Endothelial cell of umbilical vein (primary cell): ENCODE measurements at regions of chr1 and their contacts with region 1.

Region 1: GRCh38 chr1:227428803-227429202 is 110.5 kb upstream of the CDC42BPA start:
- DNase-seq: peak; percentile 98
- H3K4me3 ChIP-seq: peak overlapping the region in 1 of 3 experiments; percentile 6
- H3K27ac ChIP-seq: peak overlapping the region; percentile 99
- H3K4me1 ChIP-seq: peaks cover 55% of the 10 kb centered on the region
- H3K27me3 ChIP-seq: no peaks in the 10 kb centered on the region
- CTCF ChIP-seq: no peak
- POLR2A ChIP-seq: peak; percentile 40

Region 2: DNA sequence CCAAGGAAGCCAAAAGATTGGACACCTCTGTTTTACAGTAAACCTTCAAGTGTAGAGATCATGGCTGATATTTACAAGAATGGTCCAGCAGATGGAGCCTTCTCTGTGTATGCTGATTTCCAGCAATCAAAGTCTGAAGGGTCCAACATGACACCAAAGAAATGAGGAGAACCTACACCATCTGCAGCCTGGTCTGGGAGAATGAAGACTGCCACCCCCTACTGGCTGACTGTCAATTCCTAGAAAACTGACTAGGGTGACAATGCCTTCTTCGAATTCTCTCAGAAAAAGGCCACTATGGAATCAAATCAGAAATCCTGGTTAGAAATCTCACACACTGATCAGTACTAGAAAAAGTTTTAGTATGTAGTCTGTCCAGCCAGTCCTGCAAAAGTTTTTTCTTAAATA is 193.8 kb before region 1 on chr1:
- CTCF ChIA-PET with region 1: interaction called, 3 read pairs
- POLR2A ChIA-PET with region 1: no interaction called
- dilution Hi-C with region 1: no loop called
- intact Hi-C with region 1: loop called (anchors 2 kb)
- DNase-seq: peak; percentile 79
- H3K4me3 ChIP-seq: no peak overlapping the region
- H3K27ac ChIP-seq: no peak overlapping the region
- H3K4me1 ChIP-seq: peaks cover 11% of the 10 kb centered on the region
- H3K27me3 ChIP-seq: no peaks in the 10 kb centered on the region
- CTCF ChIP-seq: peak; percentile 55 to 60
- POLR2A ChIP-seq: no peak

Region 3: DNA sequence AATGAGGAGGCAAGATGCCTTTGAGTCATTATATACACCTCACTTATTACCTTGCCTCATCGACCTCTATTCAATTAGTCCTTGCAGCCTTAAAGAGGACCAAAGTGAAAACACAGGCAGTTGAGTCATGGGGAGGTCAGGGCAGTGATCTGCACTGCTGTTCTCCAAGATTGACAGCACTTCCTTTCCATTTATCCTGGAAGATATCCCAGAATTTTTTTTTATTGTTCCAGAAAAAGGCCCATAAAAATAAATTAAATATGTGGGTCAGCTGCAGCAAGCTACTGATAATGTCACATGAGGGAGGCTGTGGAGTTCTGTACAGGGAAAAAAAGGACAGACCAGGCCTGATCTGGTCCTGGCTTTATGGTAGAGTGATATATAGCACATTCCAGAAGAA is 77.4 kb before region 1 on chr1:
- CTCF ChIA-PET with region 1: interaction called, 20 read pairs
- POLR2A ChIA-PET with region 1: interaction called, 15 read pairs
- dilution Hi-C with region 1: no loop called
- intact Hi-C with region 1: loop called (anchors 1 kb)
- DNase-seq: peak; percentile 96
- H3K4me3 ChIP-seq: no peak overlapping the region
- H3K27ac ChIP-seq: peak overlapping the region; percentile 53
- H3K4me1 ChIP-seq: peaks cover 34% of the 10 kb centered on the region
- H3K27me3 ChIP-seq: no peaks in the 10 kb centered on the region
- CTCF ChIP-seq: no peak
- POLR2A ChIP-seq: no peak

Region 4: GRCh38 chr1:227370533-227371254 is 58.1 kb before region 1 on chr1:
- CTCF ChIA-PET with region 1: no interaction called
- POLR2A ChIA-PET with region 1: no interaction called
- dilution Hi-C with region 1: no loop called
- intact Hi-C with region 1: loop called (anchors 1 kb)
- DNase-seq: peak; percentile 80
- H3K4me3 ChIP-seq: no peak overlapping the region
- H3K27ac ChIP-seq: peak overlapping the region; percentile 14
- H3K4me1 ChIP-seq: peaks cover 23% of the 10 kb centered on the region
- H3K27me3 ChIP-seq: no peaks in the 10 kb centered on the region
- CTCF ChIP-seq: no peak
- POLR2A ChIP-seq: no peak

Region 5: DNA sequence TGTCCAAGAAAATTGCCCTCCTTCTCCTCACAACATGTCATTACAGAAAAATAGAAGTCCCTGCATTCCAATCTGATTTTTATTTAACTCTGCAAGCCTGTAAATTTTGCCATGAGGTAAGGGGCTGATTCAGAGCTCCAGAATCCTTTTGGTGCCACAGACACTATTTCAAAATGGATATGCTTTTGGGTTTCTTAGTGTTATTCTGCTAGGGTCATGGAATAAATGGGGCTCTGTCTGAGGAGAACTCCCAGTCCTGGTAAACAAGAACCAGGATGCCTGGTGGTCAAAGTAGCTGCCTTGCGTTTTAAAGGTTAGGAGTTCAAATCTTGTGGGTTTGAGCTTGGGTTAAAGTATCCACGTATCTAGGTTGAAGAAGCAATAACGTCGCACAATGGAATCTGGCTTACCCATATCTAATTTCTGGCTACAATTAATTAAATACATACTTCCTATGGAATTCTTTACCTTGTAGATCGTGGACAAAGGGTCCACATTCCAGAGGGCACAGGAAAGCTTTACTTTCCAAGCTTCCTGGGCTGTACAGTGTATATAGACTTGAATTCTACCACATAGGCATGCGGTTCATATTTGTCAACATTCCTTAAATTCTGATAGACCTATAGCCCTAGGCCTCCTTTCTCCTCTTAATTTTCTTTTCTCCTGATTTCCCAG is 12.5 kb before region 1 on chr1:
- CTCF ChIA-PET with region 1: interaction called, 4 read pairs
- POLR2A ChIA-PET with region 1: interaction called, 4 read pairs
- dilution Hi-C with region 1: no loop called
- intact Hi-C with region 1: loop called (anchors 1 kb)
- DNase-seq: no peak
- H3K4me3 ChIP-seq: no peak overlapping the region
- H3K27ac ChIP-seq: no peak overlapping the region
- H3K4me1 ChIP-seq: no peaks in the 10 kb centered on the region
- H3K27me3 ChIP-seq: no peaks in the 10 kb centered on the region
- CTCF ChIP-seq: no peak
- POLR2A ChIP-seq: no peak

Region 6: DNA sequence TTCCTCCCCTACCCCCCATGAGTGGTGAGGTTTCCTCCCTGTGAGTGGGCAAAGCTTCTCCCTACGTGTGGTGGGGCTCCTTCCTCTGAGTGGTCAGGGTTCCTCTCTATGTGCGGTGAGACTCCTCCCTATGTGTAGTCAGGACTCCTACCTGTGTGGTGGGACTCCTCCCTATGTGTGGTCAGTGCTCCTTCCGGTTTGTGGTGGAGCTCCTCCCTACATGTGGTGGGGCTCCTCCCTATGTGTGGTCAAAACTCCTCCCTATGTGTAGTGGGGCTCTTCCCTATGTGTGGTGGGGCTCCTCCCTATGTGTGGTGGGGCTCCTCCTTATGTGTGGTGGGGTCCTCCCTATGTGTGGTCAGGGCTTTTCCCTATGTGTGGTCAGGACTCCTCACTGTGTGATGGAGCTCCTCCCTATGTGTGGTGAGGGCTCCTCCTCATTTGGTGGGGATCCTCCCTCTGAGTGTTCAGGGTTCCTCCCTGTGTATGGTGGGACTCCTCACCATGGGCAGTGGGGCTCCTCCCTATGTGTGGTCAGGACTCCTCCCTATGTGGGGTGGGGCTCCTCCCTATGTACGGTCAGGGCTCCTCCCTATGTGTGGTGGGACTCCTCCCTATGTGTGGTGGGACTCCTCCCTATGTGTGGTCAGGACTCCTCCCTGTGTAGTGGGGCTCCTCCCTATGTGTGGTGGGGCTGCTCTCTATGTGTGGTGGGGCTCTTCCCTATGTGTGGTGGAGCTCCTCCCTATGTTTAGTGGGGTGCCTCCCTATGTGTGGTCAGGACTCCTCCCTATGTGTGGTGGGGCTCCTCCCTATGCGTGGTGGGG is 415.7 kb after region 1 on chr1:
- CTCF ChIA-PET with region 1: no interaction called
- POLR2A ChIA-PET with region 1: no interaction called
- dilution Hi-C with region 1: no loop called
- intact Hi-C with region 1: no loop called
- DNase-seq: no peak
- H3K4me3 ChIP-seq: no peak overlapping the region
- H3K27ac ChIP-seq: no peak overlapping the region
- H3K4me1 ChIP-seq: no peaks in the 10 kb centered on the region
- H3K27me3 ChIP-seq: no peaks in the 10 kb centered on the region
- CTCF ChIP-seq: no peak
- POLR2A ChIP-seq: no peak